ENCODE measurements at regions of chr14 and their contacts with region 1.

Region 1: GRCh38 chr14:49767562-49768300 is at the start of gene KLHDC2:
- DNase-seq: peak; percentile 79

Region 2: GRCh38 chr14:49653508-49653907 is 114.2 kb before region 1 on chr14:
- CTCF ChIA-PET with region 1: no interaction called
- POLR2A ChIA-PET with region 1: no interaction called
- DNase-seq: no peak

Region 3: GRCh38 chr14:49692811-49693734 is 74.7 kb before region 1 on chr14 and contains the start of gene KLHDC1:
- CTCF ChIA-PET with region 1: no interaction called
- POLR2A ChIA-PET with region 1: interaction called, 77 read pairs
- DNase-seq: peak; percentile 64